ENCODE measurements at regions of chr7 and their contacts with region 1.

Region 1: DNA sequence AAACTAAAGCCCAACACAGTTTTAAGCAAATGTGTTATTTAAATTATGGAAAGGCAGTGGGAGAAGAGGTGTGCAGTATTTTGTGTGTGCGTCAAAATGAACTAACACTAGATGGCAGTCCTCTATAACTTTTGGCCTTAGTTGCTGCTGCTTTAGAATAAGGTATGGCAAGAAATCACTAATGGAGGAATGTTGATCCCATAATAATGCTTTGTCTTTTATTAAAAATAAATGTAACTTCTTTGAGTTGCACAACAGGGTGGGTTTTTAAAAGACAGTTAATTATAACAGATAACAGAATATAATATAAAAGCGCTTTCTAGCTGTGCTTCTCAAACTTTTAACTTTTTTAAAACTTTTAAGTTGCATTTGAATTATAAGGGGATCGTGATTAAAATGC is 56.4 kb downstream of the BBS9 start:
- DNase-seq: peak; percentile 53
- H3K4me3 Mint-ChIP-seq: no peak overlapping the region
- H3K27ac Mint-ChIP-seq: no peak overlapping the region
- H3K4me1 Mint-ChIP-seq: peaks cover 6% of the 10 kb centered on the region
- H3K27me3 Mint-ChIP-seq: no peaks in the 10 kb centered on the region
- CTCF ChIP-seq: peak; percentile 64

Region 2: GRCh38 chr7:33201821-33202220 is 16.0 kb after region 1 on chr7:
- CTCF ChIA-PET with region 1: no interaction called
- intact Hi-C with region 1: no loop called
- DNase-seq: no peak
- H3K4me3 Mint-ChIP-seq: no peak overlapping the region
- H3K27ac Mint-ChIP-seq: no peak overlapping the region
- H3K4me1 Mint-ChIP-seq: no peaks in the 10 kb centered on the region
- H3K27me3 Mint-ChIP-seq: no peaks in the 10 kb centered on the region
- CTCF ChIP-seq: no peak

Region 3: GRCh38 chr7:33212144-33212543 is 26.4 kb after region 1 on chr7:
- CTCF ChIA-PET with region 1: no interaction called
- intact Hi-C with region 1: no loop called
- DNase-seq: no peak
- H3K4me3 Mint-ChIP-seq: no peak overlapping the region
- H3K27ac Mint-ChIP-seq: no peak overlapping the region
- H3K4me1 Mint-ChIP-seq: no peaks in the 10 kb centered on the region
- H3K27me3 Mint-ChIP-seq: no peaks in the 10 kb centered on the region
- CTCF ChIP-seq: no peak

Region 4: GRCh38 chr7:33278095-33278494 is 92.3 kb after region 1 on chr7:
- CTCF ChIA-PET with region 1: no interaction called
- intact Hi-C with region 1: no loop called
- DNase-seq: no peak
- H3K4me3 Mint-ChIP-seq: no peak overlapping the region
- H3K27ac Mint-ChIP-seq: no peak overlapping the region
- H3K4me1 Mint-ChIP-seq: no peaks in the 10 kb centered on the region
- H3K27me3 Mint-ChIP-seq: no peaks in the 10 kb centered on the region
- CTCF ChIP-seq: no peak

Region 5: GRCh38 chr7:33423646-33424020 is 237.8 kb after region 1 on chr7:
- CTCF ChIA-PET with region 1: no interaction called
- intact Hi-C with region 1: loop called (anchors 10 kb)
- DNase-seq: peak; percentile 55
- H3K4me3 Mint-ChIP-seq: no peak overlapping the region
- H3K27ac Mint-ChIP-seq: no peak overlapping the region
- H3K4me1 Mint-ChIP-seq: no peaks in the 10 kb centered on the region
- H3K27me3 Mint-ChIP-seq: peaks cover under 1% of the 10 kb centered on the region
- CTCF ChIP-seq: peak; percentile 71

Region 6: DNA sequence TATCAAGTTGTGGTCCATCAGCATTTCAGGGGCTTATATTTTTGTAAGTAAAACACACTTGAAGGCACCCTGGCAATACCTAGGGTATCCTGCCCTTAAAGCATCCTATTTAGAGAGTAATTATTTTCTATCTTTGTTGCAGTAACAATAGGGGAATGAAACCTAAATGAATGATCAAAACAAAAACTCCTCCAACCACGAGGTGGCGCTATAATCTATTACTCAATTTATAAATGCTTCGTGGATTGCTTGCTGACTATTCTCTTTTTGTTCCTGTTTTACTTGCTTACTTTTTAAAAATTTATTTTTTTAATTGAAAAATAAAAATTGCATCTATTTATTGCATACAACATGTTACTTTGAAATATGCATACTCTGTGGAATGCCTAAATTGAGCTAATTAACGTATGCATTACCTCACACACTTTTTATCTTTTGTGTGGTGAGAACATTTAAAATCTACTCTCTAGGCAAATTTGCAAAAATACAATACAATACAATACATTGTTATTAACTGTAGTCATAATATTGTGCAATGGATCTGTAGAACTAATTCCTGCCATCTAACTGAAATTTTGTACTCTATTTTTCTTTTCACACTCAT is 571.9 kb after region 1 on chr7:
- CTCF ChIA-PET with region 1: no interaction called
- intact Hi-C with region 1: loop called (anchors 10 kb)
- DNase-seq: peak; percentile 53
- H3K4me3 Mint-ChIP-seq: no peak overlapping the region
- H3K27ac Mint-ChIP-seq: no peak overlapping the region
- H3K4me1 Mint-ChIP-seq: no peaks in the 10 kb centered on the region
- H3K27me3 Mint-ChIP-seq: peaks cover 84% of the 10 kb centered on the region
- CTCF ChIP-seq: peak; percentile 83

Region 7: DNA sequence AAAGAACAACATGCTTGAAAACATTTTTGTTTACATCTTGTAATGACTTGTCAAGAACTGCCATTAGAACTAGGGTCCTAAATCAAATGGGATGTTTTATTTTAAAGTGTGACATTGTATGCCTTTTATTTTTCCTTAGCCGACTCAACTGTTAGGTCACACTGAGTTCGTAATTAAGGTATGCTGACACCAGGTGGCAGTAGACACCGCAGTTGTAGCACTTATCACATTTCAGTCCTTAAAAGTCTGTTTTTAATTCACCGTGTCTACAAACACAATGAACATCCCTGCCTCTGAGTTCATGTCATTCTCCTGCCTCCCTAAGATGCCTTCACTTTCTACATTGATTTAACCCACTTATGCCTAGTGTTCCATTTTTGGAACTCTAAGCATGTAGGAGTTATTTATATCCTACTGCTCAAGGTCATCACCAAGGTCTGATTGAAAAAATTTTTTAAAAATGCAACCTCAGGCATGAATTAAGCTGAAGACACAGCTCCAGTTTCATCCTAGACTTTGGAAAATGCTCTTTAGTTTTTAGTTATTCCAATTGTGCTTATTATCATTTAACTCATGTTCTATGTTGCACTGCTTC is 905.6 kb after region 1 on chr7:
- CTCF ChIA-PET with region 1: no interaction called
- intact Hi-C with region 1: loop called (anchors 5 kb)
- DNase-seq: peak; percentile 66
- H3K4me3 Mint-ChIP-seq: no peak overlapping the region
- H3K27ac Mint-ChIP-seq: no peak overlapping the region
- H3K4me1 Mint-ChIP-seq: no peaks in the 10 kb centered on the region
- H3K27me3 Mint-ChIP-seq: peaks cover 18% of the 10 kb centered on the region
- CTCF ChIP-seq: peak; percentile 61

Region 8: GRCh38 chr7:34425187-34425586 is 1239.4 kb after region 1 on chr7:
- CTCF ChIA-PET with region 1: no interaction called
- intact Hi-C with region 1: loop called (anchors 10 kb)
- DNase-seq: no peak
- H3K4me3 Mint-ChIP-seq: no peak overlapping the region
- H3K27ac Mint-ChIP-seq: no peak overlapping the region
- H3K4me1 Mint-ChIP-seq: peaks cover 16% of the 10 kb centered on the region
- H3K27me3 Mint-ChIP-seq: peaks cover under 1% of the 10 kb centered on the region
- CTCF ChIP-seq: no peak

Measured in Calu3 (cell line).